IMR-90 (cell line): ENCODE measurements at regions of chr4 and their contacts with region 1.

Region 1: DNA sequence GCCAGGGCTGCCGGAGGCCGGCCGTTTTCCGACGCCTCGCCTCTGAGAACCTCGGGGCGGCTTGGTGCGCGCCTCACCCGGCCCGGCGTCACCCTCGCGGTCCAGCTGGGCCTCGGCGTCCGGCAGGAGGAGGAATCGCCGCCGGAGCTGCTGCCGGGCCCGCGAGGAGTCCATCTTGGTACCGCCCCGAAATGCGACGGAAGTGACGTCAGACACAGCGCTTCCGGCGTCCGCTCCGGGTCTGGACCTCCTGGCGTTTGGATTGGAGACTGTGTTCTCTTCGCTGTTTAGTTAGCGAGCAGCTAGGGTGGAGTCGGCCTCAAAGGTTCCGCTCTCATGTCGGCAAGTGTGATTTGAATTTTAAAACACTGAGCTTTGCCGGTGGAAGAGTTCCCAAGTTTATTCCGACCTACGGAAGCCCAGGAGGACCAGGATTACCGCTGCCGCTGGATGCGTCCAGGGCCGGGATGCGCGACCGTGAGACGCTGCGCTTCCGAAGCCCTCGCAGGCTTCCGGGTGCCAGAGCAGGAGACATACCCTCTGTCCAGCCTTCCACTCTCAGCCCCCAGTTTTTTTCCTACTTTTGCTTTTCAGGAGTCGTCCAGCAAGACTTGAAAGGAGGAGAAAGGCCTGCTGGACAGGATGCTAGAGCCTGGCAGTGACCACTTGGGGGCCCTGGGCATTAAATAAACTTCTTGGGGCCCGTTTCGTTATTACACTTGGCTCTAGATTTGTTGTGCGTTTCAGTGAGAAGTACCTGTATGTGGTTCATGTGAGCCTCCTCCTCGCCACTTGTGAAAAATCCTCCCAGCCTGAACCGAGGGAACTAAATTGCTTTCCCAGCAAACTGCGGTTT is at the start of gene TMEM128:
- DNase-seq: peak; percentile 93
- ATAC-seq: peak; percentile 95
- H3K4me3 ChIP-seq: peak within 1 kb of the TSS; percentile 90
- H3K27ac ChIP-seq: peak within 1 kb of the TSS; percentile 96
- H3K4me1 ChIP-seq: peaks cover 2% of the 10 kb centered on the region; the same call in 1 of the 2 replicates
- H3K27me3 ChIP-seq: no peaks in the 10 kb centered on the region
- CTCF ChIP-seq: 0 out of 2 replicates have a peak, but pooled peaks have one; percentile 7
- POLR2A ChIP-seq: peak; percentile 92
- RAD21 ChIP-seq: no peak
- total RNA-seq, gene TMEM128: 21.9 and 27.2 TPM in 2 replicates

Region 2: GRCh38 chr4:3765271-3766040 is 482.8 kb before region 1 on chr4:
- CTCF ChIA-PET with region 1: no interaction called
- POLR2A ChIA-PET with region 1: no interaction called
- dilution Hi-C with region 1: no loop called
- in situ Hi-C with region 1: no loop called
- intact Hi-C with region 1: no loop called
- DNase-seq: peak; percentile 42
- ATAC-seq: peak; percentile 87
- H3K4me3 ChIP-seq: peak overlapping the region; percentile 18; the same call in 1 of the 2 replicates
- H3K27ac ChIP-seq: no peak overlapping the region
- H3K4me1 ChIP-seq: peaks cover 2% of the 10 kb centered on the region; the same call in 1 of the 2 replicates
- H3K27me3 ChIP-seq: peaks cover 58% of the 10 kb centered on the region
- CTCF ChIP-seq: 0 out of 2 replicates have a peak, but pooled peaks have one; percentile 23
- POLR2A ChIP-seq: no peak
- RAD21 ChIP-seq: no peak

Region 3: GRCh38 chr4:4260253-4260652 is 12.0 kb after region 1 on chr4:
- CTCF ChIA-PET with region 1: interaction called, 13 read pairs
- POLR2A ChIA-PET with region 1: no interaction called
- dilution Hi-C with region 1: no loop called
- in situ Hi-C with region 1: no loop called
- intact Hi-C with region 1: no loop called
- DNase-seq: peak; percentile 63
- ATAC-seq: peak; percentile 94
- H3K4me3 ChIP-seq: no peak overlapping the region
- H3K27ac ChIP-seq: no peak overlapping the region
- H3K4me1 ChIP-seq: peaks cover 1% of the 10 kb centered on the region; the same call in 1 of the 2 replicates
- H3K27me3 ChIP-seq: peaks cover 16% of the 10 kb centered on the region
- CTCF ChIP-seq: peak; percentile 59
- POLR2A ChIP-seq: no peak
- RAD21 ChIP-seq: peak; percentile 60

Region 4: DNA sequence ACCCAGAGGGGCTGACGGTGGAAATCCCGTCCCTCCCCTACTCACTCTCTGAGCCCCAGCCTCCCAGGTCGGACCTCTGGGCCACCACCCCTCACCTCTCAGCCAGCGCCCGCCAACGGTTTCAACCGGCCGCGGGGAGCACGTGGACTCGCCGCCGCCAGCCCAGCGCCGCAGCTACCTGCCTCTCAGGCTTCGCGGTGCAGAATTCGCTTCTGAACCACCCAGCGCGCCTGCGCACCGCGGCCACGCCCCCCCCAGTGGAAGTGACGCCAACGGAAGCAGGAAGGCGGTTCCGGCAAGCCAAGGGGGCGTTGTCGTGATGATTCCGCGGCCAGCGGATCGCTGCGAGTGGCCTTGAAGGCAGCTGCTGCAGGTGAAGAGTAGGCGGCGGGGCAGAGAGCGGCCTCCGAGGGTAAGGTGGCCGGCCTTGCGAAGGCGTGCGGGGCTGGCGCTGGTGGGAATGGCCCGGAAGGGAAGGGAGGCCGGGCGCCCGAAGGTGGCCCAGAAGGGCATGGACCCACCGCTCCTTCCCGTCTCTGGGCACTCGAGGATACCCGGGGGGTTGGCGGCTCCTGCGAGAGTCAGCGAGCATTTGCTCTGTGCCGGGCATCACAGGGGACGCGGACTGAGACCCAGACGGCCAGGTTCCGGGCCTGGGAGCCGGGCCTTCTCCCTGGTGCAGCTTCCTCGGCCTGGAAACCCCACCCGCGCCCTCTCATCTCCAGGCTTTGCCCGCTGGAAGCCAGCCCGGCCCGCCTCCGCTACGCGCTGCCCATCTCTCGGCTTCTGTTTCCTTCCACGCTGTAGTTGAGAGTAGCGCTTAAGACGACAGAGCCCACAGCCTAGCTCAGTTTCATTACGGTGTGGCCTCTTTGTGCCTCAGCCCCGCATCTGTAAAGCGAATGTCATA is 41.9 kb after region 1 on chr4 and contains the starts of genes LYAR and ZBTB49:
- CTCF ChIA-PET with region 1: no interaction called
- POLR2A ChIA-PET with region 1: no interaction called
- dilution Hi-C with region 1: no loop called
- in situ Hi-C with region 1: no loop called
- intact Hi-C with region 1: no loop called
- DNase-seq: peak; percentile 84
- ATAC-seq: peak; percentile 95
- H3K4me3 ChIP-seq: peak within 1 kb of the TSS; percentile 89
- H3K27ac ChIP-seq: peak within 1 kb of the TSS; percentile 54
- H3K4me1 ChIP-seq: peaks cover 6% of the 10 kb centered on the region
- H3K27me3 ChIP-seq: no peaks in the 10 kb centered on the region
- CTCF ChIP-seq: no peak
- POLR2A ChIP-seq: no peak
- RAD21 ChIP-seq: no peak
- total RNA-seq, gene LYAR: 5.4 and 13.9 TPM in 2 replicates
- total RNA-seq, gene ZBTB49: 4.2 and 4.8 TPM in 2 replicates